HCT116 (cell line): ENCODE measurements at regions of chr18 and their contacts with region 1.

Region 1: GRCh38 chr18:944440-944839 is 39.8 kb downstream of the ADCYAP1 start:
- DNase-seq: no peak
- ATAC-seq: peak; percentile 32
- H3K4me3 ChIP-seq: no peak overlapping the region
- H3K27ac ChIP-seq: no peak overlapping the region
- H3K4me1 ChIP-seq: peaks cover 0 to 1% of the 10 kb centered on the region in 2 experiments; a peak in 1 of 4 replicates
- H3K27me3 ChIP-seq: no peaks in the 10 kb centered on the region
- CTCF ChIP-seq: no peak
- POLR2A ChIP-seq: no peak
- RAD21 ChIP-seq: no peak

Region 2: DNA sequence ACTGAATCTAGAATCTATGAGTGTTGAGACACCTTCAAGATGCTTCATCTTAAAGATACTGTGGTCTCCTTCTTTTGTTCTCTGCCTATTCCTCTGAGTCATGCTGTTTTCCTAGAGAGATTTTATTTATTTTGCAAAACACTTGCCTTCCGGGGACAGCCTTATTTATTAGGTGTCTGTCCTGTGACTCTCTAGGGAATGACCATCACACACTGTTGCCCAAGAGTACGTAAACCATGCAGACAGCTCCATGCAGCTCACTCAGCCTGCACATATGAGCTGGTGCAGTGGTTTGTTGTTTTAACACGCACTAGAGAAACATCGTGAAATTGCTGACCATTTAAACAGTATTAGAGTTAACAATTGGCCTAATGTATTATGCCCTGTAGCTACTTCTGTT is 52.1 kb before region 1 on chr18:
- CTCF ChIA-PET with region 1: no interaction called
- POLR2A ChIA-PET with region 1: no interaction called
- RAD21 ChIA-PET with region 1: no interaction called
- intact Hi-C with region 1: no loop called
- DNase-seq: no peak
- ATAC-seq: no peak
- H3K4me3 ChIP-seq: no peak overlapping the region
- H3K27ac ChIP-seq: no peak overlapping the region
- H3K4me1 ChIP-seq: no peaks in the 10 kb centered on the region
- H3K27me3 ChIP-seq: peaks cover 15% of the 10 kb centered on the region; the same call in 1 of the 2 replicates
- CTCF ChIP-seq: no peak
- POLR2A ChIP-seq: no peak
- RAD21 ChIP-seq: no peak

Region 3: GRCh38 chr18:961644-962355 is 17.4 kb after region 1 on chr18:
- CTCF ChIA-PET with region 1: interaction called, 15 read pairs
- POLR2A ChIA-PET with region 1: no interaction called
- RAD21 ChIA-PET with region 1: no interaction called
- intact Hi-C with region 1: no loop called
- DNase-seq: peak; percentile 32
- ATAC-seq: peak; percentile 59
- H3K4me3 ChIP-seq: peak overlapping the region; percentile 36 to 49
- H3K27ac ChIP-seq: no peak overlapping the region
- H3K4me1 ChIP-seq: peaks cover 0 to 5% of the 10 kb centered on the region in 2 experiments; a peak in 1 of 4 replicates
- H3K27me3 ChIP-seq: peaks cover 21% of the 10 kb centered on the region
- CTCF ChIP-seq: peak; percentile 48 to 93 (median 88); a peak in 5 of 6 replicates
- POLR2A ChIP-seq: no peak
- RAD21 ChIP-seq: peak; percentile 53

Region 4: GRCh38 chr18:987325-988186 is 43.1 kb after region 1 on chr18:
- CTCF ChIA-PET with region 1: no interaction called
- POLR2A ChIA-PET with region 1: no interaction called
- RAD21 ChIA-PET with region 1: no interaction called
- intact Hi-C with region 1: no loop called
- DNase-seq: no peak
- ATAC-seq: no peak
- H3K4me3 ChIP-seq: no peak overlapping the region
- H3K27ac ChIP-seq: no peak overlapping the region
- H3K4me1 ChIP-seq: no peaks in the 10 kb centered on the region
- H3K27me3 ChIP-seq: peaks cover 9% of the 10 kb centered on the region; the same call in 1 of the 2 replicates
- CTCF ChIP-seq: no peak
- POLR2A ChIP-seq: no peak
- RAD21 ChIP-seq: no peak